Transverse colon (tissue), 4 donors: ENCODE measurements at regions of chr4 and their contacts with region 1.

Region 1: DNA sequence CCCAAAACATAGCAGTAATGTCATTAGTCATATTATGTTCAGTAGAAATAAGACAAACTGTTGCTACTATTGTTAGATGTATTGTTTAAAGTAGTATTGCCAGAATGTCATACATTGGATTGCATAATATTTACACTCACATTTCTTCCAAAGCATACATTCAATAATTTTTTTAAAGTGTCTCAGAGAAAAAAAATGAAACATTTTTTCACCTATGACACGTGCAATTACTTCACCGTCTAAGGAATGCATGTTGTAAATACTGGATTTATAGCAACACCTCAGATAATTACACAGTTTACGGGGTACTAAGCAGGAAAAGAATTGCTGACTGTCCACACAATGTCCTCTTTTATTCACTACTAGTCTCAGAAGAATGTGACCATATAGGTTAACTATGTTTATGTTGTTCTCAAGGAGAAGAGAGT is 162.1 kb downstream of the PCDH18 start:
- DNase-seq: no peak
- H3K4me3 ChIP-seq: no peak overlapping the region
- H3K27ac ChIP-seq: peak overlapping the region in 2 of 4 donors; percentile 43 to 61
- H3K4me1 ChIP-seq: no peaks in the 10 kb centered on the region
- H3K27me3 ChIP-seq: no peaks in the 10 kb centered on the region
- CTCF ChIP-seq: no peak
- EP300 ChIP-seq: no peak
- POLR2A ChIP-seq: no peak

Region 2: DNA sequence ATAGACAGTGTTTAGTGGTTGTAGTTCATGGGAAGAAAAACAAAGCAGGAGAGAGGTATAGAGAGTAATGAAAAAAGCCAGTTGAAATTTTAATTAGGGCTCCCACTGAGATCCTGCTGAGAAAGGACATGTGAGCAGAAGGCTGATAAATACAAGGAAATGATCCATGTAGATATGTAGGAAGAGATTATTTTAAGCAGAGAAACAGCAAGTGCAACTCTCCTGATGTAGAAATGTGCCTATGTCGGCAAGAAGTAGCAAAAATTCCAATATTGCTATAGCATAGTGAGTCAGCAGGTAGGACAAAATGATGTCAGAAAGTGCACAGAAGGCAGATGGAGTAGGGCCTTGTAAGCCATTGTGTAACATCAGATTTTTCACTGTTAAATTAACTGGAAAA is 865.2 kb before region 1 on chr4:
- in situ Hi-C with region 1: no loop called
- intact Hi-C with region 1: loop called (anchors 5 kb)
- DNase-seq: no peak
- H3K4me3 ChIP-seq: no peak overlapping the region
- H3K27ac ChIP-seq: no peak overlapping the region
- H3K4me1 ChIP-seq: no peaks in the 10 kb centered on the region
- H3K27me3 ChIP-seq: no peaks in the 10 kb centered on the region
- CTCF ChIP-seq: no peak
- EP300 ChIP-seq: no peak
- POLR2A ChIP-seq: no peak

Region 3: DNA sequence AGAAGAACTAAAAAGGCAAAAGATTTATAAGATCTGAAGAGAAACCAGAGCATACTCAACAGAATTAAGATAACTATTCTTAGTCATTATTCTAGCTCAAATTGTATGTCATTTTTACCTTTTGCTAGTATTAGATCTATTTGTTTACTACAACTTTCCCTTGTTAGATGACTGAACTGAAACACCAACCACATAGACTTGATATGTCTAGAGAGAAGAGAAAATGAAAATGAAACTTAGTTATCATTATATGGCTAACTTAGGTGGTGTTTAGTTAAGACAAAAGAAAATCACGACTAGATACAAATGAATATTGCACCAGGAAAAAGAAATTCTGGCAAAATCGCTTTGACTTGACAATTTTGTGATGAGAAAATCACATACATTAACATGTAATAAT is 528.7 kb before region 1 on chr4:
- in situ Hi-C with region 1: no loop called
- intact Hi-C with region 1: no loop called
- DNase-seq: no peak
- H3K4me3 ChIP-seq: no peak overlapping the region
- H3K27ac ChIP-seq: no peak overlapping the region
- H3K4me1 ChIP-seq: no peaks in the 10 kb centered on the region
- H3K27me3 ChIP-seq: no peaks in the 10 kb centered on the region
- CTCF ChIP-seq: no peak
- EP300 ChIP-seq: no peak
- POLR2A ChIP-seq: no peak

Region 4: DNA sequence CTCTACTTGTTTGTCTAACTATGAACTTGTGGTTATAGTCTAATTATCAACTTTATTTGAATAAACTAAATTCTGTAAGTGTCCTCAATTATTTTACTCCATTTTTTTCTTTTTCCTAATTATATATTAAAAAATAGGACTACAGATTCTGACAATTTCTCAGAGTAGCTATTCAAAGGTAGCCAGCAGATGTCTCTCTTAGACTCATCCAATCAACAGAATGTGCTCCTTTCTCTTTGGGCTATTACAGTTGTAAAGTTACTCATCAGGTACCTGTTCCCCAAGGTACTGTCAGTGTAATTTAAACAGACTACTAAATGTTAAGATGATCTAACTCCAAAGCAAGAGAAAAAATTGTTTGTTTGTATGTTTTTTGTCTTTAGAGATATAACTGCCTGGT is 86.5 kb before region 1 on chr4:
- in situ Hi-C with region 1: no loop called
- intact Hi-C with region 1: loop called (anchors 10 kb)
- DNase-seq: no peak
- H3K4me3 ChIP-seq: no peak overlapping the region
- H3K27ac ChIP-seq: no peak overlapping the region
- H3K4me1 ChIP-seq: no peaks in the 10 kb centered on the region
- H3K27me3 ChIP-seq: no peaks in the 10 kb centered on the region
- CTCF ChIP-seq: peak in 1 of 5 experiments; percentile 23
- EP300 ChIP-seq: no peak
- POLR2A ChIP-seq: no peak